ENCODE measurements at regions of chr12 and their contacts with region 1.

Region 1: DNA sequence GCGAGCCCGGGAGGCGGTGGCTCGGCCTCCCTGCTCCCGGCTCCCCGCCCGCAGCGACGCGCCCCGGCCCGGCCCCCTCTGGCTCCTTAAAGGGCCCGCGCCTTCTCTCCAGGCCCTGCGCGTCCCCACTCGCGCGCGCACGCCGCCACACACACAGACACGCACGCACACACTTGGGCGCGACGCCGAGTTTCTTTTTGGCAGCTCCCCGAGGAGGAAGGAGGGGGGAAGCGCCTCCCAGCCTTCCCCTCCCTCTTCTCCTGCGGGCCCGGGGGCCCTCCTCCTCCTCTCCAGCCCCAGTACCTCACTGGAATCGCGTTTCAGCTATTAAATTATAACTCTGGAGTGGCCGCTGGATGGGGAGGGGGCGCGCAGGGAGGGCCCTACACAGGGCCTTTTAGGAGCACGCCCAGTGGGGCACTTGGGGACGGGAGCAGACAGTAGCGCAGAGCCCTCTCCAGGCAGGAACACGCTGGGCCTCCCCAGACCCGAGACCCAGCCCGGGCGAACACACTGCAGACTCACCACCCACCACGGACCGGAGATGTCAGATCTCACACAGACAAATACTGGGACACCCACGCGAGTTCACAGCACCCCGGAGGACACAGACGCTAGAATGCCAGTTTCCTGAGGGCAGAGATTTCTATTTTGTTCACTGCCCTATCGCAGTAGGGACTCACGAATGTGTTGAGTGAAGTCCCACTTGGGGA is 405 bp upstream of the NCOR2 start:
- DNase-seq: peak; percentile 97 to 99 (median 99)
- ATAC-seq: peak; percentile 89 to 90
- H3K4me3 ChIP-seq: peak overlapping the region; percentile 84
- H3K27ac ChIP-seq: peak overlapping the region; percentile 71
- H3K4me1 ChIP-seq: peaks cover 11% of the 10 kb centered on the region
- H3K27me3 ChIP-seq: no peaks in the 10 kb centered on the region

Region 2: DNA sequence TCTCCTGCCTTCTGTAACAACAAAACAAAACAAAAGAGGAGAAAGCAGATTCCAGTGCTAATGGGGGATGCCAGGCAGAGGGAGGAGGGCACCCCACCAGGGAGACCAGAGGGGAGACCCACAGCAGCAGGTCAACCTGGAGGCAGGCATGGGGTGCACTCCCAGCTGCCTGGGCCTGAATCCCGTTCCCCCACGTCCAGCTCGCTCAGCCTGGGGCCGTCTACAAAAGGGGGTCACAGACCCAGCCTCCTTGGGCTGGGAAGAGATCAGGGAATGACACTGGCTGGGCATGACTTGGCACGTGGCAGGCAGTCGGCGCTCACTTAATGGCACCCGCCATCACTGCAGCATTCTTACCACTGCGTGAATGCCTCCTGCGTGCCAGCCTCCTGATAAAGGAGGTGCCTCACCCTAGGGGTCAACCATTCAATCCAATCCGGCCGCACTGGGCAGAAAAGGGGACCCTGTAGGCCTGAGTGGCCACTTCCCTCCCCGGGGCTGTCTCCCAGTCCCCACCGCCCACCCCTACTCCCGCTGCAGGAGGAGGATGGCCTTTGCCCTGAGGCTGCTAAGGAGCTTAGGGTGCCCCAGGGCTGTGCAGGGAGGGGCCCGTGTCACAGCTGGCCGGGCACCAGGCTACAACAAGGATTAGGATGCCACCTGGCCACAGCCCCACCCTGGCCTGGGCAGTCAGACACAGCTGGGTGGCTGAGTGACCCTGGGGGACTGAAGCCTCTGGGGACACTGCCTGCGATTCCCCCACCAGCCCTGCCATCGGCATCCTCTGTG is 87.9 kb before region 1 on chr12:
- intact Hi-C with region 1: loop called in 1 of 4 experiments (anchors 10 kb)
- DNase-seq: peak; percentile 26 to 75 (median 72)
- ATAC-seq: peak; percentile 41 to 61
- H3K4me3 ChIP-seq: no peak overlapping the region
- H3K27ac ChIP-seq: peak overlapping the region; percentile 22
- H3K4me1 ChIP-seq: peaks cover 9% of the 10 kb centered on the region
- H3K27me3 ChIP-seq: no peaks in the 10 kb centered on the region

Region 3: GRCh38 chr12:124518051-124518932 is 49.5 kb before region 1 on chr12:
- intact Hi-C with region 1: loop called in 1 of 4 experiments (anchors 5 kb)
- DNase-seq: peak; percentile 99 to 100 (median 99)
- ATAC-seq: peak; percentile 73 to 78
- H3K4me3 ChIP-seq: peak overlapping the region; percentile 35
- H3K27ac ChIP-seq: peak overlapping the region; percentile 100
- H3K4me1 ChIP-seq: peaks cover 24% of the 10 kb centered on the region
- H3K27me3 ChIP-seq: no peaks in the 10 kb centered on the region

Region 4: DNA sequence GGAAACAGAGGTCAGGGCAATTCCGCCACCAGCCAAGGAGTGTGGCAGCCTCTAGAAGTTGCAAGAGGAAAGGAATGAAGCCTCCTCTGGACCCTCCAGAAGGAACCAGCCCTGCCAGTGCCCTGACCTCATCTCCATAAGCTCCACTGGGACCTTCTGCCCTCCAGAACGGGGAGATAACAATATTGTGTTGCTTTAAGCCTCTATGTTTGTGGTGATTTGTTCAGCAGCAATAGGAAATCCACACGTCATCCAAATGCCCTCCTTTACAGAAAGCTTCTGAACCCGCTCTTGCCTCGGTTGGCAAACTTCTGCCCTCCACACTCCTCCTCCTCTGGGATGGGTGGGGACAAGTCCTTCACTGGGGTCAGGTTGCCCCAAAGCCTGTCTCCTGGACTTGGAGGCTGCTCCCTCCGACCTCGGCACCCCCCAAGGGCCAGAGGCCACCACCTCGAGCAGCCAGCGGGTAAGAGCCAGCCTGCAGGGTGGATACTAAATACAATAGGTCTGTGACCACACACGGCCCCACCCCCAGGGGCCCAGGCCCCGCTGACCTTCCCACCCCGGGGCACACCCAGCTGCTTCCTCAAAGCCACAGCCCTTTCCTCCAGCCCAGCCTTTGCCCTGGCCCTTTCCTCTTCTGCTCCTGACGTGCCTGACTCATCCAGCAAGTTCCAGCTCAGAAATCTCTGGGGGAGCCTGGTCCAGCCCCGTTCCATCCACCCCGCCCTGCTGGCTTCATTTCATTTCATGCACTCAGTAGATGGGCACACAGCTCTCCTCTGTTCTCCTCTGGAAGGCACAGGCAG is 58.3 kb after region 1 on chr12:
- intact Hi-C with region 1: loop called in 1 of 4 experiments (anchors 2 kb)
- DNase-seq: peak; percentile 95 to 96 (median 96)
- ATAC-seq: peak; percentile 93 to 97
- H3K4me3 ChIP-seq: no peak overlapping the region
- H3K27ac ChIP-seq: peak overlapping the region; percentile 94
- H3K4me1 ChIP-seq: peaks cover 13% of the 10 kb centered on the region
- H3K27me3 ChIP-seq: no peaks in the 10 kb centered on the region

Region 5: GRCh38 chr12:124720004-124720680 is 152.3 kb after region 1 on chr12:
- intact Hi-C with region 1: no loop called
- DNase-seq: peak in 1 of 3 donors; percentile 59
- ATAC-seq: peak; percentile 11 to 33
- H3K4me3 ChIP-seq: no peak overlapping the region
- H3K27ac ChIP-seq: peak overlapping the region; percentile 5
- H3K4me1 ChIP-seq: no peaks in the 10 kb centered on the region
- H3K27me3 ChIP-seq: no peaks in the 10 kb centered on the region

Region 6: GRCh38 chr12:124952801-124953200 is 385.0 kb after region 1 on chr12:
- intact Hi-C with region 1: no loop called
- DNase-seq: peak in 1 of 3 donors; percentile 20
- ATAC-seq: no peak
- H3K4me3 ChIP-seq: no peak overlapping the region
- H3K27ac ChIP-seq: no peak overlapping the region
- H3K4me1 ChIP-seq: no peaks in the 10 kb centered on the region
- H3K27me3 ChIP-seq: no peaks in the 10 kb centered on the region